ENCODE measurements at regions of chr1 and their contacts with region 1.

Region 1: DNA sequence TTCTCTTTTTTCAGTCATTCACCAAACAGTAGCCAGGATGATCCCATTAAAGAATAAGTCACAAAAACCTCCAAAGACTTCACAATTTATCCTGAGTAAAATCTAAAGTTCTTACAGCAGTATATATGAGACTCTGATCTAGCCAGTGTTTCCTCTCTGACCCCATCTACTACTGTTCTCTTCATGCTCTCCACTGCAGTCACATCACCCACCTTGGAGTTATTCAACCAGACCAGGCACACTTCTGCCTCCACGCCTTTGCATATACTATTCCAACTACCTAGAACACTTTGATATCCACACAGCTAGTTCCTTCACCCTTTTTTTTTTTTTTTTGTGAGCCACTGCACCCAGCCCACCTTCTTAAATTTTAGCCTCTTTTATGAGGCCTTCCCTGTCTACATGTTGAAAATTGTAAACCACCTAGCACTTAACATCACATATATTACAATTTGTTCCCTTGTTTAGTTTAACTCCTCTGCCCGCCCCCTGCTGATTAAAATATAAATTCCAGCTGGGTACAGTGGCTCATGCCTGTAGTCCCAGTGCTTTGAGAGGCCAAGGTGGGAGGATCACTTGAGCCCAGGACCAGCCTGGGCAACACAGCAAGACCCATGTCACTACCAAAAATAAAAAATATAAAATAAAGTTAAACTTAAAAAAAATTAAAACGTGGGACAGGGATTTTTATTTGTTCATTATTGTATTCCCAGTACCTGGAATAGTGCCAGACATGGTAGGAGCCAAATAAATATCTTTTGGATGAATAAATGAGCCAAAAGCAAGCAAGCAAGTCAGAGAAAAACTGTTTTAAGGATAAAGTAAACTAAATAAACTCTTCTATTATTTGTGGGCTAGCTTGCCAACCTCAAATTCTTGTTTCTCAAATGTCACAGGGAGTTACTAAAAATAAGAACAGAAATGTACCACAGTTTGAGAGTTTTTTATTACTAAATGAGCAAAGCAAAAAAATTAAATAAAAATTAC is 35.2 kb upstream of the MUTYH start:
- DNase-seq: no peak
- ATAC-seq: no peak
- H3K4me3 ChIP-seq: no peak overlapping the region
- H3K4me3 Mint-ChIP-seq: no peak overlapping the region
- H3K27ac ChIP-seq: no peak overlapping the region
- H3K27ac Mint-ChIP-seq: peak overlapping the region in 1 of 9 donors; percentile 1
- H3K4me1 ChIP-seq: no peaks in the 10 kb centered on the region
- H3K4me1 Mint-ChIP-seq: peaks cover 0 to 6% (median 3%) of the 10 kb centered on the region in 7 donors
- H3K27me3 ChIP-seq: no peaks in the 10 kb centered on the region
- H3K27me3 Mint-ChIP-seq: no peaks in the 10 kb centered on the region

Region 2: GRCh38 chr1:45326627-45327623 is 48.5 kb before region 1 on chr1 and contains the start of gene HPDL:
- CTCF ChIA-PET with region 1: no interaction called
- POLR2A ChIA-PET with region 1: no interaction called
- intact Hi-C with region 1: no loop called
- DNase-seq: peak in 6 of 9 donors; percentile 18 to 62 (median 34)
- ATAC-seq: peak; percentile 83
- H3K4me3 ChIP-seq: peak within 1 kb of the TSS; percentile 63
- H3K4me3 Mint-ChIP-seq: peak within 1 kb of the TSS; percentile 78 to 87 (median 83)
- H3K27ac ChIP-seq: peak within 1 kb of the TSS; percentile 29
- H3K27ac Mint-ChIP-seq: peak within 1 kb of the TSS in 6 of 9 donors; percentile 32 to 73 (median 59)
- H3K4me1 ChIP-seq: peaks cover 4 to 5% of the 10 kb centered on the region in 2 donors
- H3K4me1 Mint-ChIP-seq: peaks cover 0 to 14% (median 5%) of the 10 kb centered on the region in 7 donors
- H3K27me3 ChIP-seq: no peaks in the 10 kb centered on the region
- H3K27me3 Mint-ChIP-seq: no peaks in the 10 kb centered on the region
- total RNA-seq, gene HPDL: 0.32 to 6.7 (median 0.68) TPM

Region 3: DNA sequence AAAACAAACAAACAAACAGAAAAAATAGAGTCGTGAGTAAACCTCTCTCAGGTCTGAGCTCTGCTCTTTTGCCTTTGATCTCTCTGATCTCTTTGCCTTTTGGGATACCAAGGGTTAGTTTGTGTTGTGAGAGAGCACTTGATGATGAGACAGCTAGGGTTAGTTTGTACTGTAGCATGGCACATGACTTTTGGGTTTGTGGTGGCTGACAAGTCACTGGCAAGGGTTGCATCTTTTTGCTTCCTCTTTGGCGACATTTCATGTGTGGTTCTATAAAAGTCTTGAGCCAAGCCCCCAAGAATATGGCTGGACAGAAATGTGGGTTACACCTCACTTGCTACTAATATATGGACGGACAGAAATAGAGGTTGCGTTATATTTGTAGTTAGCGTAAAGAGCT is 55.1 kb after region 1 on chr1:
- CTCF ChIA-PET with region 1: no interaction called
- POLR2A ChIA-PET with region 1: no interaction called
- intact Hi-C with region 1: loop called in 1 of 2 experiments (anchors 10 kb)
- DNase-seq: no peak
- ATAC-seq: no peak
- H3K4me3 ChIP-seq: no peak overlapping the region
- H3K4me3 Mint-ChIP-seq: no peak overlapping the region
- H3K27ac ChIP-seq: no peak overlapping the region
- H3K27ac Mint-ChIP-seq: no peak overlapping the region
- H3K4me1 ChIP-seq: no peaks in the 10 kb centered on the region
- H3K4me1 Mint-ChIP-seq: no peaks in the 10 kb centered on the region
- H3K27me3 ChIP-seq: no peaks in the 10 kb centered on the region
- H3K27me3 Mint-ChIP-seq: no peaks in the 10 kb centered on the region

Region 4: GRCh38 chr1:45924736-45925135 is 549.3 kb after region 1 on chr1:
- CTCF ChIA-PET with region 1: no interaction called
- POLR2A ChIA-PET with region 1: no interaction called
- intact Hi-C with region 1: no loop called
- DNase-seq: no peak
- ATAC-seq: no peak
- H3K4me3 ChIP-seq: no peak overlapping the region
- H3K4me3 Mint-ChIP-seq: no peak overlapping the region
- H3K27ac ChIP-seq: no peak overlapping the region
- H3K27ac Mint-ChIP-seq: no peak overlapping the region
- H3K4me1 ChIP-seq: no peaks in the 10 kb centered on the region
- H3K4me1 Mint-ChIP-seq: peaks cover 0 to 9% (median 0%) of the 10 kb centered on the region in 7 donors
- H3K27me3 ChIP-seq: no peaks in the 10 kb centered on the region
- H3K27me3 Mint-ChIP-seq: no peaks in the 10 kb centered on the region